Panc1 (cell line): ENCODE measurements at regions of chr5 and their contacts with region 1.

Region 1: GRCh38 chr5:131932235-131932634 is 13.2 kb downstream of the MEIKIN start:
- DNase-seq: no peak
- ATAC-seq: no peak
- H3K4me3 ChIP-seq: no peak overlapping the region
- H3K27ac ChIP-seq: no peak overlapping the region
- H3K4me1 ChIP-seq: no peaks in the 10 kb centered on the region
- H3K27me3 ChIP-seq: 0 out of 2 replicates have a peak, but pooled peaks cover 2% of the 10 kb centered on the region
- CTCF ChIP-seq: no peak

Region 2: DNA sequence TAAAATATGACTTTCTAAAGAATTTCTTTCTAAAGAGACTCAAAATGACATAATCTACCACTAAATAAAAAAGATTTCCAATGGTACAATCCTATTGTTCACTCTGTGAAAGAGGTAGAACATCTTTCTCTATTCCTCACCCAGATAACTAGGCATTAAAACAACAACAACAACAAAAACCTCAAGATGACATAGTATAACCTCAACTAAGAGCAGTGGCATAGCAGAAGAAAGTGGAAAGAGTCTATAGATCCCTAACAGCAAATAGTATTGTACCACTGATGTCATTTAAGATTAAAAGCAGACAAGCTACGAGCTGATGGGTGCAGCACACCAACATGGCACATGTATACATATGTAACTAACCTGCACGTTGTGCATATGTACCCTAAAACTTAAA is 327.1 kb before region 1 on chr5:
- CTCF ChIA-PET with region 1: no interaction called
- POLR2A ChIA-PET with region 1: interaction called, 11 read pairs
- in situ Hi-C with region 1: no loop called
- intact Hi-C with region 1: no loop called
- DNase-seq: no peak
- ATAC-seq: no peak
- H3K4me3 ChIP-seq: no peak overlapping the region
- H3K27ac ChIP-seq: no peak overlapping the region
- H3K4me1 ChIP-seq: peaks cover 13% of the 10 kb centered on the region
- H3K27me3 ChIP-seq: no peaks in the 10 kb centered on the region
- CTCF ChIP-seq: no peak

Region 3: DNA sequence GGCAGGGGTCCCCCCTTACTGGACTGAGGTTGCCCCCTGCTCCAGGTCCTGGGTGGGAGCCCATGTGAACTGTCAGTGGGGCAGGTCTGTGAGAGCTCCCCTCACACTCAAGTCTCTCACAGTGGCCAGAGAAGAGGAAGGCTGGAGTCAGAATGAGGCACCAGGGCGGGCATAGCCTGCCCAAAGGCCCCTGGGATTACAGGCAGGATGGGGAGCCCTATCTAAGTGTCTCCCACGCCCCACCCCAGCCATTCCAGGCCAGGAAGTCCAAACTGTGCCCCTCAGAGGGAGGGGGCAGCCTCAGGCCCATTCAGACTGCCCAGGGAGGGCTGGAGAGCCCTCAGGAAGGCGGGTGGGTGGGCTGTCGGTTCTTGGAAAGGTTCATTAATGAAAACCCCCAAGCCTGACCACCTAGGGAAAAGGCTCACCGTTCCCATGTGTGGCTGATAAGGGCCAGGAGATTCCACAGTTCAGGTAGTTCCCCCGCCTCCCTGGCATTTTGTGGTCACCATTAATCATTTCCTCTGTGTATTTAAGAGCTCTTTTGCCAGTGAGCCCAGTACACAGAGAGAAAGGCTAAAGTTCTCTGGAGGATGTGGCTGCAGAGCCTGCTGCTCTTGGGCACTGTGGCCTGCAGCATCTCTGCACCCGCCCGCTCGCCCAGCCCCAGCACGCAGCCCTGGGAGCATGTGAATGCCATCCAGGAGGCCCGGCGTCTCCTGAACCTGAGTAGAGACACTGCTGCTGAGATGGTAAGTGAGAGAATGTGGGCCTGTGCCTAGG is 141.2 kb after region 1 on chr5 and contains the start of gene CSF2:
- CTCF ChIA-PET with region 1: no interaction called
- POLR2A ChIA-PET with region 1: no interaction called
- in situ Hi-C with region 1: no loop called
- intact Hi-C with region 1: no loop called
- DNase-seq: no peak
- ATAC-seq: peak; percentile 80
- H3K4me3 ChIP-seq: no peak within 1 kb of the TSS
- H3K27ac ChIP-seq: no peak within 1 kb of the TSS
- H3K4me1 ChIP-seq: peaks cover 3% of the 10 kb centered on the region; the same call in 1 of the 2 replicates
- H3K27me3 ChIP-seq: no peaks in the 10 kb centered on the region
- CTCF ChIP-seq: no peak
- total RNA-seq, gene CSF2: not detected

Region 4: GRCh38 chr5:132734687-132735086 is 802.5 kb after region 1 on chr5:
- CTCF ChIA-PET with region 1: no interaction called
- POLR2A ChIA-PET with region 1: no interaction called
- in situ Hi-C with region 1: no loop called
- intact Hi-C with region 1: no loop called
- DNase-seq: no peak
- ATAC-seq: no peak
- H3K4me3 ChIP-seq: no peak overlapping the region
- H3K27ac ChIP-seq: no peak overlapping the region
- H3K4me1 ChIP-seq: peaks cover 15% of the 10 kb centered on the region
- H3K27me3 ChIP-seq: no peaks in the 10 kb centered on the region
- CTCF ChIP-seq: no peak